H1 (cell line): ENCODE measurements at regions of chr15 and their contacts with region 1.

Region 1: DNA sequence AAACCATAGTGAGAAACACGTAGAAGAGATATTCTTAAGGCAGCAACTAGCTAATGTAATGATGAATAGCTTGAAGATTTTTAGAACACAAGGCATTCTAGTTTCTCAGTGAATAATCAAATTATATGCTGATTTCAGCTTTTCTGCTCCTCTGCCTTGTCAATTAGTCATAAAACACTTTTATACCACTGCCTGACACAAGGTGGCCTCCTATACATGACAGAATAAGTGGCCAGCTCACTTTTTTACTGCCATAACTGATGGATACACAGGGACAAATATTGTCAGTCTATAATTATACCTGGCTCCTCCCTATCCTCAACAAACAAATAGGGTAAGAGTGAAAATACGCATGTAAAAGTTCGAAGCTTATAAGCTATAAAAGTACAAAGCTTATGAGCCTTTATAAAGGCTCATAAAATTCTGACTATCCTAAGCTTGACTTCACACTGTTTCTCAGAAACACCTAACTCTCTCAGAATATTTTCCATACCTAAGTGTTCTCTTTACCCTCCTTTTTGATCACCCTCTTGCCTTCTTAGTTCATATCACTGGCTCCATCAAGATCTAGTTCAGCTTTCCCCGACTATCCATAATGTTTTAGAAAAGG is 81.6 kb downstream of the HERC1 start:
- DNase-seq: no peak
- H3K4me3 ChIP-seq: no peak overlapping the region
- H3K27ac ChIP-seq: no peak overlapping the region
- H3K4me1 ChIP-seq: no peaks in the 10 kb centered on the region
- H3K27me3 ChIP-seq: no peaks in the 10 kb centered on the region
- CTCF ChIP-seq: peak in 2 of 3 experiments; percentile 68 to 70; a peak in 3 of 4 replicates
- EP300 ChIP-seq: no peak
- POLR2A ChIP-seq: no peak
- RAD21 ChIP-seq: peak; percentile 90 to 93

Region 2: DNA sequence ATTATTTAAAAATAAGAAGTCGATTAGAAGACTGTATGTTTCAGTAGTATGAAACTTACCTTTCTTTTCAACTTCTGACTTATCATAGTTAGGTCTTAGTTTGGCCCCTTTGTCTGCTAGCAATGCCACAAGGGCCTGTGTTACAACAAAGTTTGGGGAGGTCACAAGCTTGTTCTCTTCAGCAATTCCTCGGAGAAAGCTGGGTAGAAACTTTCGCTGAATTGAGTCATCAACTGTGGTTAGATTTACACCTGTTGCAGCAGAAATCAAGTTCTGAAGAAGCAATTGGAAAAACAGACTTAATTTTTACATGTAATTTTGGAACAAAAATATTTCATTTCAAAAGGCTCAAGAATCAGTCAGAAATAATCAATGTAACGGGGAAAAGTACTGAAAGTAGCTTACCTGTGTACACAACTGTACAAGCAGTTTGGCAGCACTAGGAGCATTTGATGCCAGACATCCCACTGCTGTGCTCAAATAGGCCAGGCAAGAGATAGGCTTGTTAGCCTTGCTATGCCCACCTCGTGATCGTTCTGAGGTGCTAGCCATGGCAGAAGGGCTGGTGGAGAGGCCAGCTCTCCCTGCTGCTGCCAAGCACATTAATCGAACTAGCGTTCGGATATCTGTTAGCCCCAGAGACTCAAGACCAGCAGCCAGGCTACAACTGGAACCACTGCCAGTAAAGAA is 96.4 kb before region 1 on chr15:
- CTCF ChIA-PET with region 1: no interaction called
- POLR2A ChIA-PET with region 1: no interaction called
- DNase-seq: no peak
- H3K4me3 ChIP-seq: no peak overlapping the region
- H3K27ac ChIP-seq: no peak overlapping the region
- H3K4me1 ChIP-seq: no peaks in the 10 kb centered on the region
- H3K27me3 ChIP-seq: no peaks in the 10 kb centered on the region
- CTCF ChIP-seq: no peak
- EP300 ChIP-seq: no peak
- POLR2A ChIP-seq: no peak
- RAD21 ChIP-seq: no peak

Region 3: GRCh38 chr15:63712828-63713520 is 39.2 kb before region 1 on chr15:
- CTCF ChIA-PET with region 1: no interaction called
- POLR2A ChIA-PET with region 1: no interaction called
- DNase-seq: no peak
- H3K4me3 ChIP-seq: no peak overlapping the region
- H3K27ac ChIP-seq: no peak overlapping the region
- H3K4me1 ChIP-seq: 0 out of 7 replicates have a peak, but pooled peaks cover 0 to 2% (median 0%) of the 10 kb centered on the region in 4 experiments
- H3K27me3 ChIP-seq: no peaks in the 10 kb centered on the region
- CTCF ChIP-seq: no peak
- EP300 ChIP-seq: no peak
- POLR2A ChIP-seq: no peak
- RAD21 ChIP-seq: no peak

Region 4: DNA sequence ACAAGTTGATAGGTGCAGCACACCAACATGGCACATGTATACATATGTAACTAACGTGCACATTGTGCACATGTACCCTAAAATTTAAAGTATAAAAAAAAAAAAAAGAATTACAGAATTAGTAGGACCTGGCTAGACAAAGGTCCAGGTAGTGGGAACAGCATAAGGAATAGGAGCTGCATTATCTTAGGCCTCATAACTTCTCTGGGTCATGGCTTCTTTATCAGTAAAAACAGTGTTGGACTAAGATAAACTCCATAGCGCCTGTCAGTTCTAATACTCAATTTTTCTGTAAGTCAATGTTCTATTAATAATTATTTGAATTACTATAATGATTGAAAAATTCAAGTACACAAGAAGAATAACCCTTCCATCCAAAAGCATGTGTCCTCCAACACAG is 16.7 kb before region 1 on chr15:
- CTCF ChIA-PET with region 1: interaction called, 13 read pairs
- POLR2A ChIA-PET with region 1: no interaction called
- DNase-seq: no peak
- H3K4me3 ChIP-seq: no peak overlapping the region
- H3K27ac ChIP-seq: no peak overlapping the region
- H3K4me1 ChIP-seq: no peaks in the 10 kb centered on the region
- H3K27me3 ChIP-seq: no peaks in the 10 kb centered on the region
- CTCF ChIP-seq: no peak
- EP300 ChIP-seq: no peak
- POLR2A ChIP-seq: no peak
- RAD21 ChIP-seq: no peak

Region 5: GRCh38 chr15:63839722-63840121 is 87.5 kb after region 1 on chr15:
- CTCF ChIA-PET with region 1: interaction called, 13 read pairs
- POLR2A ChIA-PET with region 1: no interaction called
- DNase-seq: no peak
- H3K4me3 ChIP-seq: no peak overlapping the region
- H3K27ac ChIP-seq: no peak overlapping the region
- H3K4me1 ChIP-seq: peaks cover 0 to 2% (median 1%) of the 10 kb centered on the region in 4 experiments; a peak in 3 of 7 replicates
- H3K27me3 ChIP-seq: no peaks in the 10 kb centered on the region
- CTCF ChIP-seq: no peak
- EP300 ChIP-seq: no peak
- POLR2A ChIP-seq: no peak
- RAD21 ChIP-seq: no peak

Region 6: DNA sequence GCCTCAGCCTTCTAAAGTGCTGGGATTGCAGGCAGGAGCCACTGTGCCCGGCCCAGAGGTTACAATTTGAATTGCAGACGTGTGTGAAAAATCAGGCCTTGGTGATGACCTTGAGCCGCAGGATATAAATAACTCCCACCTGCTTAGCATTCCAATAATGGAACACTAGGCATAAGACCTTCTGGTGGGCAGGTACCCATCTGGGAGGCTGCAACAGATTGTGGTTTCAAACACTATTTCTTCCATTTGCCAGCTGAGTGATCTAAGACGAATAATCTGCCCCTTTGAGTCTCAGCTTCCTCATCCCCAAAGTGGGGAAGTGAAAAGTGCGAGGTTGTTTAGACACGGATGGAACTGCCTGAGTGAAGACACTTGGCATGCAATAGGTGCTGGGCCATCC is 129.3 kb after region 1 on chr15:
- CTCF ChIA-PET with region 1: interaction called, 10 read pairs
- POLR2A ChIA-PET with region 1: no interaction called
- DNase-seq: no peak
- H3K4me3 ChIP-seq: no peak overlapping the region
- H3K27ac ChIP-seq: no peak overlapping the region
- H3K4me1 ChIP-seq: peaks cover 3 to 19% (median 6%) of the 10 kb centered on the region in 4 experiments
- H3K27me3 ChIP-seq: no peaks in the 10 kb centered on the region
- CTCF ChIP-seq: no peak
- EP300 ChIP-seq: no peak
- POLR2A ChIP-seq: no peak
- RAD21 ChIP-seq: no peak

Region 7: GRCh38 chr15:63986751-63987341 is 234.7 kb after region 1 on chr15:
- CTCF ChIA-PET with region 1: interaction called, 13 read pairs
- POLR2A ChIA-PET with region 1: no interaction called
- DNase-seq: no peak
- H3K4me3 ChIP-seq: no peak overlapping the region
- H3K27ac ChIP-seq: no peak overlapping the region
- H3K4me1 ChIP-seq: no peaks in the 10 kb centered on the region; a peak in 1 of 7 replicates
- H3K27me3 ChIP-seq: no peaks in the 10 kb centered on the region
- CTCF ChIP-seq: no peak
- EP300 ChIP-seq: no peak
- POLR2A ChIP-seq: no peak
- RAD21 ChIP-seq: no peak

Region 8: DNA sequence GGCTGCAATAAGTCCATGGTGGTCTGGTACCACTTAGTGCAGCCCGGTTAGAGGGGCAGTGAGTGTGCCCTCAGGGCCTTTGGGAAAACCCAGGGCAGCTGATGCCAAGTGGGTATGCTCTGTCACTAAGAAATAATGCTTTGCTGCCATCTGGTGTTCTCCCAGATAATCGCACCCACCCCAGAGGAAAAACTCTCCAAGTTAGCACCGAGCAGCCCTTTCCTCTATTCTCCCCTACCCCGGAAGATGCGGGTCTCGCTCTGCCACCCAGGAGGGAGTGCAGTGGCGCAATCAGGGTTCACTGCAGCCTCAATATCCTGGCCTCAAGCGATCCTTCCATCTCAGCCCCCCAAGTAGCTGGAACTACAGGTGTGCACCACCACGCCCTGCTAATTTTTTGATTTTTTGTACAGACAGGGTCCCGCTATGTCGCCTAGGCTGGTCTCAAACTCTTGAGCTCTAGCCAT is 315.4 kb after region 1 on chr15:
- CTCF ChIA-PET with region 1: interaction called, 51 read pairs
- POLR2A ChIA-PET with region 1: no interaction called
- DNase-seq: peak; percentile 25 to 93
- H3K4me3 ChIP-seq: no peak overlapping the region
- H3K27ac ChIP-seq: no peak overlapping the region
- H3K4me1 ChIP-seq: peaks cover 0 to 1% (median 0%) of the 10 kb centered on the region in 4 experiments; a peak in 2 of 7 replicates
- H3K27me3 ChIP-seq: no peaks in the 10 kb centered on the region
- CTCF ChIP-seq: peak in 2 of 3 experiments; percentile 73 to 88; a peak in 3 of 4 replicates
- EP300 ChIP-seq: no peak
- POLR2A ChIP-seq: no peak
- RAD21 ChIP-seq: peak; percentile 95 to 96